Spleen (tissue), 13 donors: ENCODE measurements at regions of chr9 and their contacts with region 1.

Region 1: GRCh38 chr9:132288361-132288760 is 66.4 kb downstream of the SETX start:
- DNase-seq: no peak
- H3K4me3 ChIP-seq: no peak overlapping the region
- H3K27ac ChIP-seq: no peak overlapping the region
- H3K4me1 ChIP-seq: peaks cover 0 to 44% (median 13%) of the 10 kb centered on the region in 6 donors
- H3K27me3 ChIP-seq: no peaks in the 10 kb centered on the region
- CTCF ChIP-seq: no peak
- POLR2A ChIP-seq: no peak

Region 2: GRCh38 chr9:132059361-132059760 is 229.0 kb before region 1 on chr9:
- intact Hi-C with region 1: no loop called
- DNase-seq: no peak
- H3K4me3 ChIP-seq: no peak overlapping the region
- H3K27ac ChIP-seq: no peak overlapping the region
- H3K4me1 ChIP-seq: peaks cover 0 to 14% (median 0%) of the 10 kb centered on the region in 6 donors
- H3K27me3 ChIP-seq: no peaks in the 10 kb centered on the region
- CTCF ChIP-seq: no peak
- POLR2A ChIP-seq: no peak

Region 3: DNA sequence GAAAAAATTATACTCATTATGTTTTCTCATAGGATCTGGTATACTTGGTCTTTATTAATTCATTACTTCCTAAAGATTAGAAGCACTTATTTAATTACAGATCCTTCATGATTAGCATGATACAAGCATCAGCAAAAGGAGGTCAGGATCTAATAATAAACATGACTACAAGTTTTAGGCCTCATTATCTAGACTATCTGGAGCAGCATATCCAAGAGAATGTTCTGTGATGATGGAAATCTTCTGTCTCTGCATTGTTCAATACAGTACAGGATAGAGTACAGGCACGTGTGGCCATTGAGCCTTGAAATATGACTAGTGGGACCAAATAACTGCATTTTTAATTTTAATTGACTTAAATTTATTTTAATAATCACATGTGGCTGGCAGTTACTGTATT is 45.2 kb after region 1 on chr9:
- intact Hi-C with region 1: loop called (anchors 10 kb)
- DNase-seq: no peak
- H3K4me3 ChIP-seq: no peak overlapping the region
- H3K27ac ChIP-seq: no peak overlapping the region
- H3K4me1 ChIP-seq: peaks cover 0 to 6% (median 0%) of the 10 kb centered on the region in 6 donors
- H3K27me3 ChIP-seq: no peaks in the 10 kb centered on the region
- CTCF ChIP-seq: no peak
- POLR2A ChIP-seq: no peak

Region 4: GRCh38 chr9:132390966-132391365 is 102.6 kb after region 1 on chr9:
- intact Hi-C with region 1: loop called (anchors 10 kb)
- DNase-seq: no peak
- H3K4me3 ChIP-seq: no peak overlapping the region
- H3K27ac ChIP-seq: no peak overlapping the region
- H3K4me1 ChIP-seq: peaks cover 0 to 4% (median 0%) of the 10 kb centered on the region in 6 donors
- H3K27me3 ChIP-seq: no peaks in the 10 kb centered on the region
- CTCF ChIP-seq: no peak
- POLR2A ChIP-seq: no peak